K562 (cell line): ENCODE measurements at regions of chr2 and their contacts with region 1.

Region 1: GRCh38 chr2:86025229-86025820 is 80.4 kb downstream of the POLR1A start:
- DNase-seq: no peak
- ATAC-seq: peak; percentile 39
- H3K4me3 ChIP-seq: no peak overlapping the region
- H3K27ac ChIP-seq: no peak overlapping the region
- H3K4me1 ChIP-seq: peaks cover 0 to 10% of the 10 kb centered on the region in 2 experiments; a peak in 2 of 5 replicates
- H3K27me3 ChIP-seq: no peaks in the 10 kb centered on the region
- CTCF ChIP-seq: peak; percentile 4 to 21 (median 18); a peak in 1 of 6 replicates
- EP300 ChIP-seq: no peak
- POLR2A ChIP-seq: no peak
- RAD21 ChIP-seq: peak in 1 of 2 experiments; percentile 25; a peak in 1 of 4 replicates

Region 2: GRCh38 chr2:86079981-86080911 is 54.9 kb after region 1 on chr2:
- CTCF ChIA-PET with region 1: no interaction called
- POLR2A ChIA-PET with region 1: no interaction called
- in situ Hi-C with region 1: no loop called
- intact Hi-C with region 1: loop called (anchors 5 kb)
- DNase-seq: peak; percentile 38 to 75 (median 54)
- ATAC-seq: peak; percentile 99
- H3K4me3 ChIP-seq: no peak overlapping the region
- H3K27ac ChIP-seq: no peak overlapping the region
- H3K4me1 ChIP-seq: no peaks in the 10 kb centered on the region; a peak in 1 of 5 replicates
- H3K27me3 ChIP-seq: no peaks in the 10 kb centered on the region
- CTCF ChIP-seq: peak; percentile 80 to 87 (median 85)
- EP300 ChIP-seq: no peak
- POLR2A ChIP-seq: no peak
- RAD21 ChIP-seq: peak; percentile 85 to 89

Region 3: GRCh38 chr2:86623651-86624541 is 598.6 kb after region 1 on chr2 and contains the start of gene RNF103:
- CTCF ChIA-PET with region 1: no interaction called
- POLR2A ChIA-PET with region 1: no interaction called
- in situ Hi-C with region 1: no loop called
- intact Hi-C with region 1: no loop called
- DNase-seq: peak; percentile 91 to 94 (median 91)
- ATAC-seq: peak; percentile 94
- H3K4me3 ChIP-seq: peak within 1 kb of the TSS; percentile 61
- H3K27ac ChIP-seq: peak within 1 kb of the TSS; percentile 85
- H3K4me1 ChIP-seq: peaks cover 4 to 13% of the 10 kb centered on the region in 2 experiments; a peak in 4 of 5 replicates
- H3K27me3 ChIP-seq: no peaks in the 10 kb centered on the region
- CTCF ChIP-seq: no peak
- EP300 ChIP-seq: no peak
- POLR2A ChIP-seq: peak; percentile 78
- RAD21 ChIP-seq: 0 out of 4 replicates have a peak, but pooled peaks of 1 of the 2 experiments have one; percentile 10
- polyA plus RNA-seq, gene RNF103: 1.2 to 1.4 TPM